Activated CD4-positive, alpha-beta memory T cell treated with anti-CD3 and anti-CD28 coated beads for 36 hours (primary cell): ENCODE measurements at regions of chr6 and their contacts with region 1.

Region 1: DNA sequence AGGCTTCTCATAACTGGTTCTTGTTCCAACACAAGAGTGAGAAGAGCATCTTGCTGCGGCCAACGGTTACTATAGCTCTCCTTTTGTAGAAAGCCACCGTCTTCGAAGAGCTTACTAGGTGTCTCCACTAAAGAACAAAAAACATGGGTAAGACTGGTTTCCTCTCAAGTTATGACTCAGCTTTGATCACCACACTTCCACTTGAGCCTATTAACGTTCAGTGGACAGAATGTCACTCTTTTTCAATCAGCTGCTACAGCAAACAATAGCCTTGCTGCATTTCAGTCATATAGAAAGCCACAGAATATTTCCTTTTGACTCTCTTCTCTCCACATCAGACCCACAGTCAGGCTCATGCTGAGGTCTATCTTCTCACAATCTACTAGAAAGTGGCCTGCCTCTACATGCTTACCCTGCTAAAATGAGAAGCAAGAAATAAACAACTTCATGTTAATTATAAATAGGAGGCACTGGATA is 243.5 kb upstream of the PREP start:
- DNase-seq: peak; percentile 68
- H3K4me3 Mint-ChIP-seq: no peak overlapping the region
- H3K27ac Mint-ChIP-seq: peak overlapping the region; percentile 70
- H3K4me1 Mint-ChIP-seq: peaks cover 65% of the 10 kb centered on the region
- H3K27me3 Mint-ChIP-seq: peaks cover 48% of the 10 kb centered on the region

Region 2: DNA sequence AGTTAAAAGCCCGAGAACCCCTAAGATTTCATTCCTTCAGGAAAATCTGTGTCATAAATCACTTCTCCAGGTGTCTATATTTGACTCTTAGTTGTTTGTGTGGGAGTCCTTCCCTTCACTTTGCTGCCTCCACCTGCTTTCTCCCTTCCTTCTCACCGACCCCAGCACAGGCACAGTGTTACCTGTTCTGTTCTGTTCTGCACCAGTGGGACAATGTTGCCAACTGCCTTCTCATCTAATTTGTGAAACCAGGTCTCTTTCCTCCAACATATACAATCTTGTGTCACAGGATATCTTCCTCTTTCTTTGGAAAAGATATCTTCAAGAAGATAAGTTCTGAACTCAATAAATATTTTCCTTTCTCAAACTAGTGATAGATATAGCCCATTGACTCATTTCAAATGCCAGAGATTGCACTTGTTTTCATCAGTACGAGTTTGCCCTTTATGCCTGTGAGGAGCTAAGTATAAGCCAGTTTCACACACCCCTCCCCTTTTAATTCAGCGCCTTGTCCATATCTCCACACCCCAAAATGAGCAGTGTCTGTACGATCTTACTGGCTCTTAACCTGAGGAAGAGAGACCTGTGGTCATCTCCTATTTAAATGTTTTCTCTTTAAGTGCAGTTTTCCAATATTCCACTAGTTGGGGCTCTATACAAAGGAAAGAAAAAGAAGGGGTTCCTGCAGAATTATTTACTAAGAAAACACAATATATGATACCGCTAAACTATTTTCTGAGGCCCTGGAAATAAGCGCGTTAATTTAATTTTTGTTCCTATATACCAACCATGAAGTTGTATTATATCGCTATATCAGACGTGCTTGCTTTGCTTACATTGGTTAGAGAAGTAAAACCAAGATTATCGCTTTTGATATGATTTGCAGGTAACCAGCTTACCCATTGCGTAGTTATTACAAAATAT is 161.9 kb before region 1 on chr6:
- CTCF ChIA-PET with region 1: no interaction called
- POLR2A ChIA-PET with region 1: interaction called, 3 read pairs
- intact Hi-C with region 1: loop called (anchors 1 kb)
- DNase-seq: no peak
- H3K4me3 Mint-ChIP-seq: peak overlapping the region; percentile 2
- H3K27ac Mint-ChIP-seq: peak overlapping the region; percentile 30
- H3K4me1 Mint-ChIP-seq: peaks cover 32% of the 10 kb centered on the region
- H3K27me3 Mint-ChIP-seq: peaks cover 7% of the 10 kb centered on the region

Region 3: GRCh38 chr6:105601541-105602236 is 44.7 kb before region 1 on chr6:
- CTCF ChIA-PET with region 1: no interaction called
- POLR2A ChIA-PET with region 1: interaction called, 9 read pairs
- intact Hi-C with region 1: loop called (anchors 1 kb)
- DNase-seq: peak; percentile 86
- H3K4me3 Mint-ChIP-seq: peak overlapping the region; percentile 33
- H3K27ac Mint-ChIP-seq: peak overlapping the region; percentile 86
- H3K4me1 Mint-ChIP-seq: peaks cover 26% of the 10 kb centered on the region
- H3K27me3 Mint-ChIP-seq: peaks cover 3% of the 10 kb centered on the region

Region 4: GRCh38 chr6:105786890-105787655 is 140.6 kb after region 1 on chr6:
- CTCF ChIA-PET with region 1: no interaction called
- POLR2A ChIA-PET with region 1: no interaction called
- intact Hi-C with region 1: loop called (anchors 10 kb)
- DNase-seq: peak; percentile 58
- H3K4me3 Mint-ChIP-seq: no peak overlapping the region
- H3K27ac Mint-ChIP-seq: no peak overlapping the region
- H3K4me1 Mint-ChIP-seq: peaks cover 37% of the 10 kb centered on the region
- H3K27me3 Mint-ChIP-seq: peaks cover 12% of the 10 kb centered on the region

Region 5: GRCh38 chr6:105920071-105920470 is 273.6 kb after region 1 on chr6:
- CTCF ChIA-PET with region 1: no interaction called
- POLR2A ChIA-PET with region 1: no interaction called
- intact Hi-C with region 1: loop called (anchors 1 kb)
- DNase-seq: peak; percentile 50
- H3K4me3 Mint-ChIP-seq: no peak overlapping the region
- H3K27ac Mint-ChIP-seq: peak overlapping the region; percentile 74
- H3K4me1 Mint-ChIP-seq: peaks cover 13% of the 10 kb centered on the region
- H3K27me3 Mint-ChIP-seq: peaks cover 7% of the 10 kb centered on the region

Region 6: DNA sequence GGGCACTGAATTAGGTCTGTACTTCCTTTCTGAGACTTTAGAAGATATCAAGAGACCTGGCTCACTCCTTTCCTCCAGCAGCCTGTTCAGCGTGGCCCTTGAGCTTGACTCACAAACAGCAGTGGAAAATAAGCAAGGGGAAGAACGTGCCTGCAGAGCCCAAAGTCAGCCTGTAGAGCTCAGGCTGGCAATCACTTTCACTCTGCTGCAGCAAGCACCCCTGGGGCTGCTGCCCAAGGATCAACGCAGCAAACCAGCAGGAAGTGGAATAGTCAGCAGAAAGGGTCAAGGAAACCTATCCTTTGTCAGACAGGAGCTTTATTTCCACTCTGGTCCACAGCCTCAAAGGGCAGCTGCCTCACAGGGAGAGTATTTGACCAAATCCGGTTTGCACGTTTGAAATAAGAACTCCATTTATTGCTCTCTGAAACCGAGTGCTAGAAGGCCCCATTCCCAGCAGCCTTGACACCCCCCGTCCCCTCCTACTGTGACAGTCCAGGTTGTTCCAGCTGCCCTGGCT is 517.1 kb after region 1 on chr6:
- CTCF ChIA-PET with region 1: no interaction called
- POLR2A ChIA-PET with region 1: no interaction called
- intact Hi-C with region 1: loop called (anchors 1 kb)
- DNase-seq: peak; percentile 80
- H3K4me3 Mint-ChIP-seq: peak overlapping the region; percentile 64
- H3K27ac Mint-ChIP-seq: peak overlapping the region; percentile 91
- H3K4me1 Mint-ChIP-seq: peaks cover 60% of the 10 kb centered on the region
- H3K27me3 Mint-ChIP-seq: no peaks in the 10 kb centered on the region